OCI-LY7 (cell line): ENCODE measurements at regions of chr19 and their contacts with region 1.

Region 1: GRCh38 chr19:7340959-7341837 is 7.5 kb upstream of the ARHGEF18 start:
- DNase-seq: peak; percentile 94
- H3K4me3 ChIP-seq: peak overlapping the region; percentile 17
- H3K27ac ChIP-seq: peak overlapping the region; percentile 96
- H3K4me1 ChIP-seq: peaks cover 95% of the 10 kb centered on the region
- CTCF ChIP-seq: peak; percentile 96

Region 2: GRCh38 chr19:7098701-7099596 is 242.2 kb before region 1 on chr19:
- CTCF ChIA-PET with region 1: interaction called, 3 read pairs
- POLR2A ChIA-PET with region 1: interaction called, 7 read pairs
- intact Hi-C with region 1: loop called (anchors 1 kb)
- DNase-seq: peak; percentile 93
- H3K4me3 ChIP-seq: peak overlapping the region; percentile 67
- H3K27ac ChIP-seq: peak overlapping the region; percentile 57
- H3K4me1 ChIP-seq: peaks cover 22% of the 10 kb centered on the region
- CTCF ChIP-seq: no peak

Region 3: GRCh38 chr19:7197760-7198696 is 143.2 kb before region 1 on chr19:
- CTCF ChIA-PET with region 1: no interaction called
- POLR2A ChIA-PET with region 1: no interaction called
- intact Hi-C with region 1: loop called (anchors 2 kb)
- DNase-seq: peak; percentile 97
- H3K4me3 ChIP-seq: peak overlapping the region; percentile 75
- H3K27ac ChIP-seq: peak overlapping the region; percentile 72
- H3K4me1 ChIP-seq: peaks cover 42% of the 10 kb centered on the region
- CTCF ChIP-seq: no peak

Region 4: GRCh38 chr19:7293795-7294570 is 47.2 kb before region 1 on chr19 and contains the start of gene INSR:
- CTCF ChIA-PET with region 1: no interaction called
- POLR2A ChIA-PET with region 1: no interaction called
- intact Hi-C with region 1: loop called (anchors 1 kb)
- DNase-seq: peak; percentile 93
- H3K4me3 ChIP-seq: peak within 1 kb of the TSS; percentile 95
- H3K27ac ChIP-seq: peak within 1 kb of the TSS; percentile 77
- H3K4me1 ChIP-seq: peaks cover 49% of the 10 kb centered on the region
- CTCF ChIP-seq: no peak
- total RNA-seq, gene INSR: 57.7 and 90.3 TPM in 2 replicates

Region 5: GRCh38 chr19:7535035-7535992 is 194.1 kb after region 1 on chr19 and contains the start of gene PNPLA6:
- CTCF ChIA-PET with region 1: no interaction called
- POLR2A ChIA-PET with region 1: no interaction called
- intact Hi-C with region 1: loop called (anchors 10 kb)
- DNase-seq: peak; percentile 95
- H3K4me3 ChIP-seq: peak within 1 kb of the TSS; percentile 93
- H3K27ac ChIP-seq: peak within 1 kb of the TSS; percentile 8
- H3K4me1 ChIP-seq: peaks cover 13% of the 10 kb centered on the region
- CTCF ChIP-seq: no peak
- total RNA-seq, gene PNPLA6: 50.6 and 54.3 TPM in 2 replicates